ENCODE measurements at regions of chr1 and their contacts with region 1.

Region 1: DNA sequence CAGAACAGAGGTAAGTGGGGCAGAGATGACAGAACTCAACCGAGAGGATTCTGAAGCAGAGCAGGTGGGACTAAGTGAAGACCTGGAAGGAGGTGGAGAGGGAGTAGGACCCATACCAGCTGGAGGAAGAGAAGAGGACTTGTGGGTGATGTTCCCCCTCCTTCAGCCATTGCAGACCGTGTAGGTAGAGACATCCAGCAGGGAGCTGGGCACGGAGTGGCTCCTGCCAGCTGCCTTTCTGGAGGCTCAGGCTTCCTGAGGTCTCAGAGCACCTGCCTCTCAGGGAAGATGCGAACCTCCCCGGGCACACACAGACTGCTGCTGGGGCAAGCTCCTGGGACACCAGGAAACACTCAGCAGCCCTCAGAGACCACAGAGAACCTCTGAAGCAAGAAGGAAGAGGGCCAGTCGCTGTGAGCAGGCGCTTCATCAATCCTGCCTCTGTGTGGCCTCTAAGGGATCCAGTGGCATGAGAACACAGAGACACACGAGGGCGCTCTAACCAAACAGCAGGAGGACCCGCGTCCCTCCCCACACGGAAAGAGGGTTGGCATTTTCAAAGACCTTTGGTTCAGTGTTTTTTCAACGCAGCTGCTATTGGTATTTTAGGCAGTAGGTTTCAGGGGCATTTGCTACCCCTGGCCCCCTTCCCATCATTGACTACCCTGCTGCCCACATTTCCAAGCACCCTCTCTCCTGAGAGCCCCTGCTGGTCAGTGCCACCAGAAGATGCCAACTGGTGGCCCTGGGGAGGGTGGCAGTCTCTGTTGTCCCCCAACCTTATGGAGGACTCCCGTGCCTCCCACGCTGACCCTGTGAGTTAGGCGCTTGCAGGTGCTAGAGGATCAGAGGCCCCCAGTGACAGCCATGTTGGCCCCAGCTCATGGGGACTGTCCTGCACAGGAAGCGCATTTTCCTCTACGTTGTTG is 89.6 kb upstream of the EDN2 start:
- DNase-seq: peak; percentile 63
- ATAC-seq: peak; percentile 96
- H3K4me3 Mint-ChIP-seq: no peak overlapping the region
- H3K27ac Mint-ChIP-seq: no peak overlapping the region
- H3K4me1 Mint-ChIP-seq: peaks cover 23% of the 10 kb centered on the region
- H3K27me3 Mint-ChIP-seq: no peaks in the 10 kb centered on the region
- CTCF ChIP-seq: peak; percentile 70

Region 2: GRCh38 chr1:41641478-41641819 is 67.4 kb after region 1 on chr1:
- CTCF ChIA-PET with region 1: interaction called, 3 read pairs
- POLR2A ChIA-PET with region 1: no interaction called
- intact Hi-C with region 1: loop called (anchors 5 kb)
- DNase-seq: no peak
- ATAC-seq: peak; percentile 56
- H3K4me3 Mint-ChIP-seq: peak overlapping the region; percentile 33
- H3K27ac Mint-ChIP-seq: no peak overlapping the region
- H3K4me1 Mint-ChIP-seq: peaks cover 35% of the 10 kb centered on the region
- H3K27me3 Mint-ChIP-seq: no peaks in the 10 kb centered on the region
- CTCF ChIP-seq: no peak

Region 3: GRCh38 chr1:41791667-41792484 is 217.8 kb after region 1 on chr1:
- CTCF ChIA-PET with region 1: no interaction called
- POLR2A ChIA-PET with region 1: no interaction called
- intact Hi-C with region 1: no loop called
- DNase-seq: no peak
- ATAC-seq: no peak
- H3K4me3 Mint-ChIP-seq: no peak overlapping the region
- H3K27ac Mint-ChIP-seq: no peak overlapping the region
- H3K4me1 Mint-ChIP-seq: peaks cover 26% of the 10 kb centered on the region
- H3K27me3 Mint-ChIP-seq: no peaks in the 10 kb centered on the region
- CTCF ChIP-seq: no peak

Region 4: DNA sequence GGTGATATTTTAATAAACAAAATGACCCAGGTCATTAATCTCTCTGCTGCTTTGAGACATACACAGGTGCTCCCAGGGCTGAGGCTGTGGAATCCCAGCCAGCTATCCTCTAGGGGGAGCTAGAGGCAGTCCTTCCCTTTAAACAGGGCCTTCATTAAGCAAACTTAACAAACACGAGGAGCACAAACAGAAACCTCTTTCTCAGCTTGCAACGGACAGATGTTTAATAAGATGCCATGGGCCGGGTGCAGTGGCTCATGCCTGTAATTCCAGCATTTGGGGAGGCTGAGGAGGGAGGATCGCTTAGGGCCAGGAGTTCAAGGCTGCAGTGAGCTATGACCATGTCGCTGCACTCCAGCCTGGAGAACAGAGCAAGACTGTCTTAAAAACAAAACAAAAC is 238.0 kb after region 1 on chr1:
- CTCF ChIA-PET with region 1: interaction called, 33 read pairs
- POLR2A ChIA-PET with region 1: interaction called, 3 read pairs
- intact Hi-C with region 1: loop called (anchors 1 kb)
- DNase-seq: no peak
- ATAC-seq: peak; percentile 34
- H3K4me3 Mint-ChIP-seq: no peak overlapping the region
- H3K27ac Mint-ChIP-seq: no peak overlapping the region
- H3K4me1 Mint-ChIP-seq: peaks cover 35% of the 10 kb centered on the region
- H3K27me3 Mint-ChIP-seq: no peaks in the 10 kb centered on the region
- CTCF ChIP-seq: no peak

Region 5: GRCh38 chr1:41891199-41891896 is 317.3 kb after region 1 on chr1:
- CTCF ChIA-PET with region 1: interaction called, 38 read pairs
- POLR2A ChIA-PET with region 1: interaction called, 4 read pairs
- intact Hi-C with region 1: loop called (anchors 1 kb)
- DNase-seq: peak; percentile 39
- ATAC-seq: peak; percentile 98
- H3K4me3 Mint-ChIP-seq: peak overlapping the region; percentile 83
- H3K27ac Mint-ChIP-seq: peak overlapping the region; percentile 88
- H3K4me1 Mint-ChIP-seq: peaks cover 15% of the 10 kb centered on the region
- H3K27me3 Mint-ChIP-seq: no peaks in the 10 kb centered on the region
- CTCF ChIP-seq: no peak

Region 6: DNA sequence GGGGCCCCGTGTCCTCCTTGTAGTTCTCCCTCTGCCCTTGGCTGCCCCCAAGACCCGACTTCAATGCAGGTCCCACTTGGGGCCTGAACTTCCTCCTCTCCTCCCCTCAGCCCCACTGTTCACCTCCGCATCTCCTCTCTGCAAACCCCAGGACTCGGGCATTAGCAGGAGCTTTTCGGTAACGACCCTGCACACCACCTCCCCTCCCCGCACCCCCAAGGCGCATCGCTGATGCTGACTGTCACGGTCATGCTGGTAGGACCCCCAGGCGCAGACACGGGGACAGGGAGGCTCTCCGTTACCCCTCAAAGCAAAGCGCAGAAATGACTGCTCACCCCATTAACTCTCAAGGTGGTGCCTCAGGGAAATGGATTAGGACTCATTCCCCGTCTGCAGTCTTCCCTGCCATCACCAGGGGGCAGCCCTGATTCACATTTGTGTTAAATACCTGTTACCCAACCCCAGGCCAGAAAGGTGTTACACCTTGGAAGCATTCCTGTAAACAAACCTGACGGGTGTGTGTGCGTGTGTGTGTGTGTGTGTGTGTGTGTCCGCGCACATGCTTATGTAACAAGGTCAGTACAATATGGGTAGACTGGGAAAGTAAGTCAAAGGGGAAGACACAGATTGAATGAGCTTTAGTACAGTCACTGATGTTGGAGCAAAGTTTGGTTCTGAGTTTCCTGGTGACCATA is 572.7 kb after region 1 on chr1:
- CTCF ChIA-PET with region 1: no interaction called
- POLR2A ChIA-PET with region 1: no interaction called
- intact Hi-C with region 1: loop called (anchors 1 kb)
- DNase-seq: peak; percentile 39
- ATAC-seq: peak; percentile 56
- H3K4me3 Mint-ChIP-seq: no peak overlapping the region
- H3K27ac Mint-ChIP-seq: no peak overlapping the region
- H3K4me1 Mint-ChIP-seq: no peaks in the 10 kb centered on the region
- H3K27me3 Mint-ChIP-seq: peaks cover 27% of the 10 kb centered on the region
- CTCF ChIP-seq: no peak

Measured in activated B cell treated with CpG ODN at 0.5 μM for 24 hours (primary cell).